ENCODE measurements at regions of chr4 and their contacts with region 1.

Region 1: DNA sequence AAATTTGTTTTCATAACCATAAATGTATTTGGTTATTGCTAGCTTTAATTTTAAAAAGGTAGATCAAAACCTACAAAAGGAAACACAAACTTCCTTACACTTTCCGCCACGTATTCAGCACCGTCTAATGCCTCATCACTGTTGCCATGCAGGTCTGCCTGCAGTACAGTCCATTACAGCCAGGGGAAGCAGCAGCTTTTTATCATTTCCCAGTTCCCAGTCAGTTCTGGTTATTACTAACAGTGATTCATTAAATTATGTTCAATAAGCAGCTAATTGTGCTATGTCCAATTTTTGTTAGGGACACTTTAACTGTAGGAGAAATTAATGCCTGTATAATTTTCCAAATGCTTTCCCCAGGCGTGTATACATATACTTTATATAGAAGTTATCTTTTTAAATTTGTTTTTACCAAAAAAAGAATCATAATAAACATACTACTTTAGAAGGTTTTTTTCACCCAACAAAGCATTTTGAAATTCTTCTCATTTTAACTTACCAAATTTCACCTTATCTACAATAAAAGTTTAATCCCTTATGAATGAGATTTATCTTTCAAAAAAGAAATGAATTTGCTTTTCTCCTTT is 93.3 kb downstream of the ANXA3 start:
- DNase-seq: peak; percentile 65 to 87 (median 83)
- H3K4me3 ChIP-seq: peak overlapping the region in 1 of 3 experiments; percentile 51
- H3K4me3 Mint-ChIP-seq: no peak overlapping the region
- H3K27ac ChIP-seq: peak overlapping the region in 1 of 2 donors; percentile 80
- H3K27ac Mint-ChIP-seq: peak overlapping the region in 6 of 7 donors; percentile 85 to 96 (median 94)
- H3K4me1 ChIP-seq: peaks cover 41 to 62% of the 10 kb centered on the region in 2 donors
- H3K4me1 Mint-ChIP-seq: peaks cover 62% of the 10 kb centered on the region
- H3K27me3 ChIP-seq: no peaks in the 10 kb centered on the region
- H3K27me3 Mint-ChIP-seq: peaks cover 0 to 2% (median 0%) of the 10 kb centered on the region in 3 donors
- CTCF ChIP-seq: peak; percentile 95

Region 2: GRCh38 chr4:78369679-78370078 is 275.2 kb before region 1 on chr4:
- intact Hi-C with region 1: no loop called
- DNase-seq: no peak
- H3K4me3 ChIP-seq: no peak overlapping the region
- H3K4me3 Mint-ChIP-seq: no peak overlapping the region
- H3K27ac ChIP-seq: no peak overlapping the region
- H3K27ac Mint-ChIP-seq: no peak overlapping the region
- H3K4me1 ChIP-seq: no peaks in the 10 kb centered on the region
- H3K4me1 Mint-ChIP-seq: no peaks in the 10 kb centered on the region
- H3K27me3 ChIP-seq: no peaks in the 10 kb centered on the region
- H3K27me3 Mint-ChIP-seq: peaks cover 0 to 2% (median 0%) of the 10 kb centered on the region in 3 donors
- CTCF ChIP-seq: no peak

Region 3: GRCh38 chr4:78710536-78710935 is 65.7 kb after region 1 on chr4:
- intact Hi-C with region 1: no loop called
- DNase-seq: no peak
- H3K4me3 ChIP-seq: no peak overlapping the region
- H3K4me3 Mint-ChIP-seq: no peak overlapping the region
- H3K27ac ChIP-seq: no peak overlapping the region
- H3K27ac Mint-ChIP-seq: no peak overlapping the region
- H3K4me1 ChIP-seq: peaks cover 11 to 12% of the 10 kb centered on the region in 2 donors
- H3K4me1 Mint-ChIP-seq: peaks cover 18% of the 10 kb centered on the region
- H3K27me3 ChIP-seq: no peaks in the 10 kb centered on the region
- H3K27me3 Mint-ChIP-seq: peaks cover 0 to 3% (median 0%) of the 10 kb centered on the region in 3 donors
- CTCF ChIP-seq: no peak

Region 4: GRCh38 chr4:78775303-78776030 is 130.6 kb after region 1 on chr4:
- intact Hi-C with region 1: loop called (anchors 2 to 10 kb)
- DNase-seq: peak; percentile 81 to 84 (median 83)
- H3K4me3 ChIP-seq: peak overlapping the region; percentile 78 to 99 (median 90)
- H3K4me3 Mint-ChIP-seq: peak overlapping the region; percentile 93 to 99
- H3K27ac ChIP-seq: peak overlapping the region; percentile 98 to 99
- H3K27ac Mint-ChIP-seq: peak overlapping the region; percentile 96 to 99 (median 98)
- H3K4me1 ChIP-seq: peaks cover 23 to 48% of the 10 kb centered on the region in 2 donors
- H3K4me1 Mint-ChIP-seq: peaks cover 15% of the 10 kb centered on the region
- H3K27me3 ChIP-seq: no peaks in the 10 kb centered on the region
- H3K27me3 Mint-ChIP-seq: no peaks in the 10 kb centered on the region
- CTCF ChIP-seq: no peak

Measured in CD14-positive monocyte (primary cell).